GM18951 (cell line): ENCODE measurements at regions of chr17 and their contacts with region 1.

Region 1: GRCh38 chr17:4881761-4882555 is 17.4 kb upstream of the C17orf107 start:
- POLR2A ChIP-seq: no peak

Region 2: DNA sequence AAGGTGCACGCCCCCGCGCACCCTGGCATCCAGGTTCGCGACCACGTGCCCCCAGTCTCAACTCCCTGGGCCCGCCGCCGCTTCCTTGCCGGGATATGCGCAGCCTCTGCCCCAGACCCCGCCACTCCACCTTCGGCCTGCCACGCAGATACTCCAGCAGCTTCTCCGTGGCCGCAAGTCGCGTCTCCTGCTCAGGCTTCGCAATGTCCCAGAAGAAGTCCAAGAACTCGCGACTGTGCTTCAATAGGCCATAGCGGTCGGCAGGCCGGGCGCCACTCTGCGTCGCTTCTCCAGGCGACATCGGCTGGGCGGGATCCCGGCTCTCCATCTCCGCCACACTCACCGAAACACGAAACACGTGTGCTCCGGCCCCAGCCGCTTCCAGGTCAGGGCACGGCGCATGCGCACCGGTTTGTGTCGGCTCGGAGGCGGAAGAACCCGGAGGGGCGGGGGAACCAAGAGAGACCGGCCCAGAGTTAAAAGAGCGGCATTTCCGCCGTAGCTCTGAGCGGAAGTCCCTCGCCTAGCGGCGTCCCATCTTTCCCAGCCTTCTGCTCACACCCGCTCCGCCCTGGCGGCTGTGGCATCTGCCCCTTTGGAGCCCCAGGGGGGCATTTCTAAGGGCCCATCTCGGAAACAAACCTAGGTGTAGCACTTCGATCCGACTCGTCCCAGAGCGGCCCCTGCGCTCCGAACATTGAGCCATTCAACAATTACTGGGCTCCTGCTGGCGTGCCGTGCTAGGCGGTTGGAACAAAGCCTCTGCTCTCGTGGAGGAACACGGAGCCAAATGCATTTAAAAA is 326.8 kb before region 1 on chr17 and contains the start of gene MYBBP1A:
- in situ Hi-C with region 1: loop called (anchors 25 kb)
- POLR2A ChIP-seq: peak; percentile 96

Region 3: GRCh38 chr17:4709794-4710692 is 171.9 kb before region 1 on chr17 and contains the start of gene ARRB2:
- in situ Hi-C with region 1: loop called (anchors 10 kb)
- POLR2A ChIP-seq: peak; percentile 69